CD4-positive, alpha-beta memory T cell (primary cell): ENCODE measurements at regions of chr15 and their contacts with region 1.

Region 1: DNA sequence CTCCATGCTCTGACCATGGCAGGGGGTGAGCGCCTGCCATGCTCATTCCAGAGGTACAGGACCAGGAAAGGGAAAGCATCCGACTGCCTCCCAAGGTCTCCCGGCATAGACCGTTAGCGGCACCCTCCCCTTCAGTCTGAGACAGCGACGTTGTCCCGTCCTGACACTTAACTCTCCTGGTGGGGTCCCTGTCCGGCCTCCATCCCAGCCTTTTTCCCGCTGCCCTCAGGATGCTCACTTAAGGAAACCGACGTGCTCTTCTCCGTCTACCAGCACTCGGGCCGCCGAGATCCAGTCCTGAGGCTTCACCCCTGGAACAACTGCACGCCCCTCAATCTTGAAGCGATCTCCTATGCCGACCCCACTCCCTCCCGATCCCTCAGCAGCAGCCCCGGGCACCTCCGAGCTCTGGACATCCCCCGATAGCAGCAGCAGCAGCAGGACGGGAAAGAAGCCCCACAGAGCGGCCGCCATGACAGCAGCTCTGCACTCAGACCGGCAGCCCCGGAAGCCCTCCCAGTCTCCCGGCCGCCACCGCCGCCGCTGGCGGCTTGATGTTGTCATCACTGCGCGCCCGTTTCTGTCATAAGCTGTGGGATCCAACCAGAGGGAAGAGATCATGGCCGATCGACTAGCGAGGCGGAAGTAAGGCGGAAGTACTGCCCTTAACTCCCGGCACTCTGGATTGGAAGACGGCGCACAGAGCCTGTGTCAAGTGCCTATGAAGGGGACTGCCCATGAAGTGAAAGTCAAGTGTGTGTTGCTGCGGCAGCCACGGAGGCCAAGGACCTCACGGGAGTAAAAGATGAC is at the starts of genes EMC7 and PGBD4:
- DNase-seq: peak; percentile 99 to 100 (median 99)
- H3K4me3 ChIP-seq: peak within 1 kb of the TSS; percentile 94 to 97
- H3K4me3 Mint-ChIP-seq: peak within 1 kb of the TSS; percentile 92 to 100 (median 100)
- H3K27ac ChIP-seq: peak within 1 kb of the TSS; percentile 85
- H3K27ac Mint-ChIP-seq: peak within 1 kb of the TSS; percentile 94 to 100 (median 99)
- H3K4me1 ChIP-seq: peaks cover 37% of the 10 kb centered on the region
- H3K4me1 Mint-ChIP-seq: peaks cover 16 to 52% (median 36%) of the 10 kb centered on the region in 4 donors
- H3K27me3 ChIP-seq: no peaks in the 10 kb centered on the region
- H3K27me3 Mint-ChIP-seq: peaks cover 0 to 1% of the 10 kb centered on the region in 2 donors
- total RNA-seq, gene EMC7: 38.3 to 47.8 TPM
- total RNA-seq, gene PGBD4: 4.7 to 4.9 TPM

Region 2: DNA sequence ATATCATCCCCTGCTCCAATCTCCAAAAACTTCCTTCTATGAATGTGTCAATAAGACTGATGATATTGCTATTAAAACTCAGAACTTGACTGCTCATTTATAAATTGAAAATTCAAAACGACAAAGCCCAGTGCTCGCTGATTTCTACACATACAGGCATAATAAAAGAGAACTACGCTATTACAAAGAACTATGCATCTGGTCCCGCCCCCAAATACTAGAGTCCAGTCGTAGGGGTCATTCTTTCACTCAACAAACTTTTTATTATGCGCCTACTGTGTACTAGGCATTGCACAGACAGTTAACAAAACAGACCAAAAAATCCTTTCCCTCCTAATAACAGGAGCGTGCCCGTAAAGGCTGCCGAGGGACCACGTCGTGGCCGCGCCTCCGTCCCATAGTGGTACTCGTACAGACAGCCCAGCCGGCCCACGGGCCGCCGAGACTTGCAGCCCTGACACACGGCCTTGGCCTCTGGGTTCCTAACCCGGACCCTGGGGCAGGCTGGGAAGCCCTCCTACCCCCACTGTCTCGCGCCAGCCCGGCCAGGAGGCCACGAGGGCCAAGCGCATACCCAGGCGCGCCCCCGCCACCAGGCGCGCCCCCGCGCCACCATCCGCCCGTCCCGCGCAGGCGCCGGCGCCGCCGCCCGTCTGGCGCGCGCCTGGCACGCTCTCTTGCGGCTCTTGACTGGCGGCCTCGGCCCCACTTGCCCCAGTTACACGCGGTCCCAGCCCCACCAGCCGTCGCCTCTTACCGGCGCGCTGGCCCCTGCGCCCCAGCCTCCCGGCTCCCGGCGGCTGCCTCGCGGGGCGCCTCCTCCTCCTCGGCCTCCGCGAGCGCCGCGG is 63.3 kb before region 1 on chr15:
- CTCF ChIA-PET with region 1: no interaction called
- POLR2A ChIA-PET with region 1: interaction called, 13 read pairs
- intact Hi-C with region 1: loop called (anchors 1 kb)
- DNase-seq: peak; percentile 65 to 74 (median 70)
- H3K4me3 ChIP-seq: peak overlapping the region; percentile 92 to 96
- H3K4me3 Mint-ChIP-seq: peak overlapping the region; percentile 85 to 97 (median 94)
- H3K27ac ChIP-seq: peak overlapping the region; percentile 73
- H3K27ac Mint-ChIP-seq: peak overlapping the region; percentile 83 to 96 (median 93)
- H3K4me1 ChIP-seq: peaks cover 13% of the 10 kb centered on the region
- H3K4me1 Mint-ChIP-seq: peaks cover 9 to 23% (median 15%) of the 10 kb centered on the region in 4 donors
- H3K27me3 ChIP-seq: no peaks in the 10 kb centered on the region
- H3K27me3 Mint-ChIP-seq: no peaks in the 10 kb centered on the region

Region 3: DNA sequence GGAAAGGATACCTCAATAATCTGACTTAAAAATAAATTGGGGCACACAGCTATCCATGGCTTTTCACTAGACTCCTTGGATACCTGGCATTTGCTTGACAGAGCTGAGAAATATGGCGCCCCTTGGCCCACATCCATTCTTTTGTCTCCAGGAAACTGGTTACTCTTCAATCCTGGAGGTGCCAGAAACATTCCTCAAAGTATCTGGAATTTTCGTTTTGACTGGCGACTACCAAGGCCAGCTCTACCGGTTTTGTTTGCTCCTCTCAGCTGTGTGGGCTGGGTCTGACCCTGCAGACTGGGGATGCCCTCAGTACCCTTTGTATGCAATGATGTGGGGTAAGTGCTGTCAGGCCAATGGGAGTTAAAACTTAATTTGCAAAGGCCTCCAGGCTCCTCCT is 81.4 kb after region 1 on chr15:
- CTCF ChIA-PET with region 1: no interaction called
- POLR2A ChIA-PET with region 1: no interaction called
- intact Hi-C with region 1: no loop called
- DNase-seq: no peak
- H3K4me3 ChIP-seq: no peak overlapping the region
- H3K4me3 Mint-ChIP-seq: no peak overlapping the region
- H3K27ac ChIP-seq: no peak overlapping the region
- H3K27ac Mint-ChIP-seq: no peak overlapping the region
- H3K4me1 ChIP-seq: no peaks in the 10 kb centered on the region
- H3K4me1 Mint-ChIP-seq: peaks cover 10 to 21% (median 15%) of the 10 kb centered on the region in 4 donors
- H3K27me3 ChIP-seq: no peaks in the 10 kb centered on the region
- H3K27me3 Mint-ChIP-seq: no peaks in the 10 kb centered on the region

Region 4: DNA sequence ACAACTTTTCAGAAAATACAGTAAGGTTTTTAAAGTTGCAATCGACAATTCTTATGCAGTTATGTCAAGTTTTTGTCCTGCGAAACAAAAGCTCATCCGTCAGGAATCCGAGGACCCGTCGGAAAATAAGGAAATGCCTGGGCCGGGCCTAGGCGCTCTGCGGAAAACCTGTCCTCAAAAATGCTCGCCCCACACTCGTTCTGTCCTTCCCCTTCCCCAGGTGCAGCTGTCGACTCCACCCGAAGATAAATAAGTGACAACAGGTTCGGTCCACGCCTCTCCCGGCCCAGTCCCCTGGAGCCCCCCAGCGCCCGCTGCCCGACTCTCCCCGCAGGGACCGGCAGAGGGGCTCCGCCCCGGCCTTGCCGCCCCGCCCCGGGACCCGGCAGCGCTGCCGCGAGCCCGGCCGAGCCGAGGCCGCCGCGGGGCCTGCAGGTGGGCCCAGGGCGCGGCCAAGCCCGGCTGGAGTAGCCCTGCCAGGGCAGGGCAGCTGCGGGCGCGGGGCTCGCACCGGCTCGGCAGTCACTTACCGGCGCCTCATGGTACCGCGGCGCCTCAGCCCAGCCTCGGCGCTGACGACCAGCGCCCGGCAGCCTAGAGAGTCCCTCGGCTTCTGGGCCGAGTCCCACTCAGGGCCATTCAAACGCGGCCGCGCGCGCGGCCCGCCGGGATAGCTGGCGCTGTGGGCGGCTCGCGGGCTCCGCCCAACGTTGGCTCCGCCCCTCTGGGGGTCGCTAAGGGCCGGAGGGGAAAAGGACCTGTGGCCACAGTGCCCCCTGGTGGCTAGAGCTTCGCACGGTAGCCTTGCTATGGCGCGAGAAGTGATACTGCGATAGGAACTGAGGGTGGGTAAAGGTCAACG is 108.1 kb after region 1 on chr15 and contains the start of gene KATNBL1:
- CTCF ChIA-PET with region 1: interaction called, 16 read pairs
- POLR2A ChIA-PET with region 1: interaction called, 23 read pairs
- intact Hi-C with region 1: loop called (anchors 1 kb)
- DNase-seq: peak; percentile 89 to 92 (median 89)
- H3K4me3 ChIP-seq: peak within 1 kb of the TSS; percentile 37 to 72
- H3K4me3 Mint-ChIP-seq: peak within 1 kb of the TSS; percentile 88 to 95 (median 92)
- H3K27ac ChIP-seq: peak within 1 kb of the TSS; percentile 66
- H3K27ac Mint-ChIP-seq: peak within 1 kb of the TSS; percentile 61 to 93 (median 91)
- H3K4me1 ChIP-seq: peaks cover 13% of the 10 kb centered on the region
- H3K4me1 Mint-ChIP-seq: peaks cover 15 to 29% (median 21%) of the 10 kb centered on the region in 4 donors
- H3K27me3 ChIP-seq: no peaks in the 10 kb centered on the region
- H3K27me3 Mint-ChIP-seq: peaks cover 0 to 4% of the 10 kb centered on the region in 2 donors
- total RNA-seq, gene KATNBL1: 34.7 to 37.9 TPM

Region 5: DNA sequence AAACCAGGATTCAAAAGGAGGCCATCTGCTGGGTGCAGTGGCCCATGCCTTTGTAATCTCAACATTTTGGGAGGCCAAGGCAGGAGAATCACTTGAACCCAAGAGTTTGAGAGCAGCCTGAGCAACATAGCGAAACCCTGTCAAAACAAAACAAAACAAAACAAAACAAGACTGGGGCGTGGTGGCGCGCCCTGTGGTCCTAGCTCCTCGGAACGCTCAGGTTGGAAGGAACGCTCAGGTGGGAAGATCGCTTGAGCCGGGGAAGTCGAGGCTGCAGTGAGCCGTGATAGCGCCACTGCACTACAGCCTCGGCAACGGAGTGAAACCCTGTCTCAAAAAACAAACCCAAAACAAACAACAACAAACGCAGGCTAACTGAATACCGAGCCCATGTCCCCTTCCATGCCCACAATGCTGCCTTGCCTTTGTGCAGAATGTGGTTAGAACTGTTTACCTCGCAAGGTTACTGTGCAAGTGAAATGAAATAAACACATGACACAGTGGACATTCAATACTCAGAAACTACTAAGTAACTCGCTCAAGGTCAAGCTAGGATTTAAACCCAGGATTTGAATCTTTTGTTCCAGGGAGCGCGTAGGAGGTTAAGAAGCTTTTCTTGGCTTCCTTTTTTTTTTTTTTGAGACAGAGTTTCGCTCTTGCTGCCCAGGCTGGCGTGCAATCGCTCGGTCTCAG is 122.5 kb after region 1 on chr15:
- CTCF ChIA-PET with region 1: interaction called, 5 read pairs
- POLR2A ChIA-PET with region 1: interaction called, 34 read pairs
- intact Hi-C with region 1: loop called (anchors 1 kb)
- DNase-seq: no peak
- H3K4me3 ChIP-seq: peak overlapping the region; percentile 88 to 93
- H3K4me3 Mint-ChIP-seq: peak overlapping the region; percentile 90 to 99 (median 96)
- H3K27ac ChIP-seq: peak overlapping the region; percentile 89
- H3K27ac Mint-ChIP-seq: peak overlapping the region; percentile 92 to 100 (median 99)
- H3K4me1 ChIP-seq: peaks cover 25% of the 10 kb centered on the region
- H3K4me1 Mint-ChIP-seq: peaks cover 21 to 32% (median 25%) of the 10 kb centered on the region in 4 donors
- H3K27me3 ChIP-seq: no peaks in the 10 kb centered on the region
- H3K27me3 Mint-ChIP-seq: peaks cover 3% of the 10 kb centered on the region in 2 donors

Region 6: GRCh38 chr15:34969340-34970097 is 867.9 kb after region 1 on chr15 and contains the start of gene AQR:
- CTCF ChIA-PET with region 1: no interaction called
- POLR2A ChIA-PET with region 1: interaction called, 4 read pairs
- intact Hi-C with region 1: loop called (anchors 1 kb)
- DNase-seq: peak; percentile 88 to 95 (median 90)
- H3K4me3 ChIP-seq: peak within 1 kb of the TSS; percentile 68 to 77
- H3K4me3 Mint-ChIP-seq: peak within 1 kb of the TSS; percentile 96 to 100 (median 98)
- H3K27ac ChIP-seq: peak within 1 kb of the TSS; percentile 69
- H3K27ac Mint-ChIP-seq: peak within 1 kb of the TSS; percentile 91 to 98 (median 97)
- H3K4me1 ChIP-seq: peaks cover 35% of the 10 kb centered on the region
- H3K4me1 Mint-ChIP-seq: peaks cover 30 to 48% (median 40%) of the 10 kb centered on the region in 4 donors
- H3K27me3 ChIP-seq: no peaks in the 10 kb centered on the region
- H3K27me3 Mint-ChIP-seq: no peaks in the 10 kb centered on the region
- total RNA-seq, gene AQR: 42.8 to 47.6 TPM

Region 7: DNA sequence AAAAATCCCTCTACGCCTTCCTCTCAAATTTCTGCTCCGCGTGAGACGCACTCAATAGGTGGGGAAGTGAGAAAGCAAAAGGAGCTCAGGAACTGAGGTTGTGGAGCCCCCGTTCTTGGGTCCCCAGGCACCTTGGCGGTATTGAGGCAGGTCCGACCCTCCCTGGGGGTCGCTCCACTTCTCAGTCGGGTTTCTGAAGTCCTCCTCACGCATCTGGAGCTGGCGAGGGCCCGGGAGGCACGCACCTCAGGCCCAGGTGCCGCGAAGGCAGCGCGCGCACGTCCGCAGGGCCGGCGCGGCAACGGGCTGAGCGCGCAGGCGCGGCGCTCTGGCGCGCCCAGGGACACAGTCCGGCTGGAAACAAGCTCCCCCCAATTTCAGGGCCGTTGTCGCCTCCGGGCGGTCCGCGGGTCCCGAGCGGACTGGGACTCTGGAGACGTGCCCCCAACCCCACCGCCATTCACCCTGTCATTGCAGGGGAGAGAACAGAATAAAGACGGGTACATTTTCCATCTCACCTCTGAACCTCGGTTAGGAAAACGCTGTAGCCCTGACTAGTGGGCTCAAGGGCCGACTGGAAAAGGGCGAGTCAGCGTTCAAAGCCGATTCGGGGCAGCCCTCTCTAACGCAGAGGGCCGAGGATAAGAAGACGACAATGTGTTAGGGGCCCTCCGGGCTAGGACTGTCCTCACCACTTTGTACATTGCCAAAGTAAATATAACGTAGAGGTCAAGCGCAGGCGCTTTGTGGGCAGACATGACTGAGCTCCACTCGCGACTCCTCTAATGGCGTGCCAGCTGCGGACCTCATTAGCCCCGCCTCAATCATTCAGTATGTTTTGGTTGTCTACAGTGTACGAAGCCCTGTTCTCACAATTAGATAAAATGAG is 886.7 kb after region 1 on chr15 and contains the start of gene ZNF770:
- CTCF ChIA-PET with region 1: no interaction called
- POLR2A ChIA-PET with region 1: interaction called, 11 read pairs
- intact Hi-C with region 1: loop called (anchors 1 kb)
- DNase-seq: peak; percentile 76 to 88 (median 85)
- H3K4me3 ChIP-seq: peak within 1 kb of the TSS; percentile 97 to 100
- H3K4me3 Mint-ChIP-seq: peak within 1 kb of the TSS; percentile 94 to 100 (median 98)
- H3K27ac ChIP-seq: peak within 1 kb of the TSS; percentile 96
- H3K27ac Mint-ChIP-seq: peak within 1 kb of the TSS; percentile 98 to 100 (median 99)
- H3K4me1 ChIP-seq: peaks cover 47% of the 10 kb centered on the region
- H3K4me1 Mint-ChIP-seq: peaks cover 29 to 54% (median 38%) of the 10 kb centered on the region in 4 donors
- H3K27me3 ChIP-seq: no peaks in the 10 kb centered on the region
- H3K27me3 Mint-ChIP-seq: peaks cover 0 to 3% of the 10 kb centered on the region in 2 donors
- total RNA-seq, gene ZNF770: 55.8 to 63.5 TPM

Region 8: DNA sequence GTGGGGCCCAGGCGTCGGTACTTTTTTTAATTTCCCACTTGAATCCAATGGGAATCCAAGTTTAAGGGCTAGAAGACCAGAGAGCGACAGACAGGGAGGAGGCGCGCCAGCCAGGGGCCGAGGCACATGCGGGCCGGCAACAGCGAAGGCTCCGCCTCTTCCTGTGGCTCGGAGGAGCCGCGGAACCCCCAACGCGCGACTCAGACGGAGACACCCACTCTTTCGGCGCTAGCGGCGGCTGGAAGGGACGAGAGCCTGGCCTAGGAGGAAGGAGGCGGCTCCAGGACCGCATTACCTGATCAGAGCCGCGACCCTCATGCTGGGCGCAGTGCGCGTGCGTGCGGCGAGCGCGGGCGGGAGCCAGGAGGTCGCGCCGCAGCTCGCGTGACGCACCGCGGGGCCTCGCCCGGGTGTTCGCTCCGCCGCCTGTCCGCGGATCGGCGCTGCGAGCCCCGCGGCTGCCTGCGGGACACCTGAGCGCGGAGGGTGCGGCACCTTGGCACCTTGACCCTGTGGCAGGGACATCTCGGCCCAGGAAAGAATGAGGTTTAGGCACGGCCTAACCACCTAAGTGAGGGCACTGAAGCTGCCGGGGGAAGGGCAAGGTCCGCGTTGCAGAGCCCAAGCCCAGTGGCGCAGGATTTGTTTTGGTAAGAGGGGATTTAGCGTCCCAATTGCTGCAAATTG is 1444.4 kb after region 1 on chr15 and contains the start of gene DPH6:
- CTCF ChIA-PET with region 1: no interaction called
- POLR2A ChIA-PET with region 1: no interaction called
- intact Hi-C with region 1: loop called (anchors 5 kb)
- DNase-seq: peak; percentile 88 to 92 (median 89)
- H3K4me3 ChIP-seq: peak within 1 kb of the TSS; percentile 51 to 61
- H3K4me3 Mint-ChIP-seq: peak within 1 kb of the TSS; percentile 94 to 100 (median 98)
- H3K27ac ChIP-seq: peak within 1 kb of the TSS; percentile 87
- H3K27ac Mint-ChIP-seq: peak within 1 kb of the TSS; percentile 97 to 100 (median 98)
- H3K4me1 ChIP-seq: peaks cover 18% of the 10 kb centered on the region
- H3K4me1 Mint-ChIP-seq: peaks cover 12 to 31% (median 16%) of the 10 kb centered on the region in 4 donors
- H3K27me3 ChIP-seq: no peaks in the 10 kb centered on the region
- H3K27me3 Mint-ChIP-seq: no peaks in the 10 kb centered on the region
- total RNA-seq, gene DPH6: 11.5 to 14.5 TPM